Motor neuron (in vitro differentiated cells): ENCODE measurements at regions of chr11 and their contacts with region 1.

Region 1: DNA sequence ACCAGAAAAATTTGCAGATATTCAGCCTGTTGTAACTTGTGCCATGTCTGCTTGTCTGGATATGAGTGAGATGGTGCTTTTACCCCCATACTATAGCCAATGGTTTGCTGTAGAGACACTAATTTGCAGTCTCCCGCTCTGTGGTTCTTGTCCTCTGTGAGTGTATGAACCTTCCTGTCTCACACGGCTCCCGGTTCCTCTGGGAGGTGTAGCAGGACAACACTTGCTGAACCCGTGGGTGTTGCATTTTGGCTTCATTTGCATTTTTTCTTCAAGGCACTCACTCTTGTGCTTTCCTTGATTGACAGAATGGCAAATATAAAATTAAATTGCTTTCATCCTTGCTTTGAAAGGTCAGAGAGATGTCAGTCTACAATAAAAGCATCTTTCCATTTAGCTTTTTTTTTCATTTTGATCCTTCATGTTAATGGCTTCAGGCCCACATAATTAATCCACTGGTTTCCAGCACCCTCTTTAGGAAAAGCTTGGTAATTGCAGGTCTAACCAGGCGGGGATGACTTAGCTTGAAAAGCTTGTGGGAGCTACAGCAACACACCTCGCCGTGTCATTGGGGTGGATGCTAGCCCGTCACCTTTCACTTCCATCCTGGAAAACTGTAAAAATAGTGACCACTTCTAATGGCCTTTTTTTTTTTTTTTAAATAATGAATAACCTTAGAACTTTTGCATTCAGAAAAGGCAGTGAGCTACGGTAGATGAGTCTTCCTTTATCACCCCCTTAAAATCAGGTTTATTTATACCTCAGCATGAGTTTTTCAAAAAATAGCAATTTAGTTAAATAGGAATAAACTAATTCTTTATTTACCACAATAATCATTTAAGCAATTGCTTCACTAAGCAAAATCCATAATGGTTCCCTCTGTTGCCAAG is 27.4 kb upstream of the ST14 start:
- ATAC-seq: peak; percentile 30 to 95 (median 66)
- H3K4me3 ChIP-seq: no peak overlapping the region
- H3K27ac ChIP-seq: no peak overlapping the region
- H3K4me1 ChIP-seq: no peaks in the 10 kb centered on the region

Region 2: DNA sequence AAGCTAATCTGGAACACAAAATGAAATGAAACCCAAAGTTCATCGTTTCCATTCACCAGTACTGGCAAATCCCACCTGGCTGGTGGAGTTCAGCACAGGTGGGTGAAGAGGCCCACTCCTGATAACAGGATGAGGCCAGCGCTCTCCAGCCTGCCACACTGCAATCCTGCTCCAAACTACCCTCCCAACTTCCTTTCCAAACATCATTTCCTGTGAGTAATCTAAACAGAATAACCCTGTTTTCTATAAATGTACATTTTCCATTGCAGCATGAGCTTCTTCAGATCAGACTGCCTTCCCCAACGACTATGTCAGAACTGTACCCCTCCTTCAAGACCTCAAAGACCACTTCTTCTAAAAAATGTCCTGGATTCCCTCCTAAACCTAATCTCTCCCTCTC is 220.9 kb before region 1 on chr11:
- in situ Hi-C with region 1: loop called in 3 of 9 experiments (anchors 25 kb)
- ATAC-seq: no peak
- H3K4me3 ChIP-seq: no peak overlapping the region
- H3K27ac ChIP-seq: no peak overlapping the region
- H3K4me1 ChIP-seq: no peaks in the 10 kb centered on the region

Region 3: GRCh38 chr11:129922674-129923073 is 209.5 kb before region 1 on chr11:
- in situ Hi-C with region 1: loop called in 7 of 9 experiments (anchors 10 to 25 kb)
- ATAC-seq: no peak
- H3K4me3 ChIP-seq: no peak overlapping the region
- H3K27ac ChIP-seq: no peak overlapping the region
- H3K4me1 ChIP-seq: no peaks in the 10 kb centered on the region

Region 4: GRCh38 chr11:129930296-129930695 is 201.9 kb before region 1 on chr11:
- in situ Hi-C with region 1: loop called in 4 of 9 experiments (anchors 10 to 25 kb)
- ATAC-seq: no peak
- H3K4me3 ChIP-seq: no peak overlapping the region
- H3K27ac ChIP-seq: no peak overlapping the region
- H3K4me1 ChIP-seq: no peaks in the 10 kb centered on the region